ENCODE measurements at regions of chr3 and their contacts with region 1.

Region 1: GRCh38 chr3:52154117-52155094 is at the start of gene POC1A:
- DNase-seq: peak; percentile 88 to 99
- H3K4me3 ChIP-seq: peak within 1 kb of the TSS; percentile 72 to 91
- H3K27ac ChIP-seq: peak within 1 kb of the TSS; percentile 88 to 92
- H3K4me1 ChIP-seq: peaks cover 6 to 11% of the 10 kb centered on the region in 2 donors
- H3K27me3 ChIP-seq: no peaks in the 10 kb centered on the region
- CTCF ChIP-seq: peak in 2 of 3 experiments; percentile 10 to 13
- total RNA-seq, gene POC1A: not detected

Region 2: DNA sequence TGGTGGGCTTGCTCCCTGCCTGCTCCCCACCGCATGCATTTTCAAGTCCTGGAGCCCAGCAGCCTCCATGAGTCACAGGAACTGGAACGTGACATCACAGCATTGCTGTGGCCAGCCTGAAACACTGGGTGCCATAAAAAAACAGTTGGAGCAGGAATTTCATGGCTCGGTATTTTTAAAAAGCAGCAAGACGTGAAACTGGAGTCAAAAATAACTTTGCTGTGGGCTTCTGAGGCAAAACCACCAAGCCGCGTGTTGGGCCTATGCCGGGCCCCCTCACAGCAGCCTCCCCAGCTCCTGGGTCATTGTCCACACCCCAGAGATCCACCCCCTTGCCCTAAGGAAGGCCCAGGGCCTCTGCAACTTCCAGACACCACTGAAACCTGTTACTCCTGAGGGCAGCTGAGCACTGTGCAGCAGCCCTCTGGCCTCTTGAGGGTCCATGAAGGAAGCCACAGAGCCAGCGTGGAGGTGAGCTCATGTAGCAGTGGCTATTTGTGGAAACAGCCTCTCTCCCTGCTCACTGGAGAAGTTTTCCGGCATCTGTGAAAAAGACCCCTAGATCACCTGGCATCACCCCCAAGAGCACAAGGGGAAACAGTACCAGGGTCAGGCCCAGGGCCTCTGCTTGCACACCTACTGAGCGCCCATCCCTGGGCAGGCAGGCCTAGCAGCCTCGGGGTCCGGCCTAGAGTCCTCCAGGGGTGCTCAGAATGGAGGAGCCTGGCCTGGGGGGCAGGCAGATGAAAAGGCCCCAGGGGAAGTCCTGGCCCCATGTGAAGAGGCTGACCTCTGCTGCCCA is 64.1 kb before region 1 on chr3:
- intact Hi-C with region 1: loop called (anchors 1 kb)
- DNase-seq: peak in 1 of 2 donors; percentile 93
- H3K4me3 ChIP-seq: no peak overlapping the region
- H3K27ac ChIP-seq: peak overlapping the region; percentile 98 to 99
- H3K4me1 ChIP-seq: peaks cover 31 to 41% of the 10 kb centered on the region in 2 donors
- H3K27me3 ChIP-seq: no peaks in the 10 kb centered on the region
- CTCF ChIP-seq: no peak

Region 3: DNA sequence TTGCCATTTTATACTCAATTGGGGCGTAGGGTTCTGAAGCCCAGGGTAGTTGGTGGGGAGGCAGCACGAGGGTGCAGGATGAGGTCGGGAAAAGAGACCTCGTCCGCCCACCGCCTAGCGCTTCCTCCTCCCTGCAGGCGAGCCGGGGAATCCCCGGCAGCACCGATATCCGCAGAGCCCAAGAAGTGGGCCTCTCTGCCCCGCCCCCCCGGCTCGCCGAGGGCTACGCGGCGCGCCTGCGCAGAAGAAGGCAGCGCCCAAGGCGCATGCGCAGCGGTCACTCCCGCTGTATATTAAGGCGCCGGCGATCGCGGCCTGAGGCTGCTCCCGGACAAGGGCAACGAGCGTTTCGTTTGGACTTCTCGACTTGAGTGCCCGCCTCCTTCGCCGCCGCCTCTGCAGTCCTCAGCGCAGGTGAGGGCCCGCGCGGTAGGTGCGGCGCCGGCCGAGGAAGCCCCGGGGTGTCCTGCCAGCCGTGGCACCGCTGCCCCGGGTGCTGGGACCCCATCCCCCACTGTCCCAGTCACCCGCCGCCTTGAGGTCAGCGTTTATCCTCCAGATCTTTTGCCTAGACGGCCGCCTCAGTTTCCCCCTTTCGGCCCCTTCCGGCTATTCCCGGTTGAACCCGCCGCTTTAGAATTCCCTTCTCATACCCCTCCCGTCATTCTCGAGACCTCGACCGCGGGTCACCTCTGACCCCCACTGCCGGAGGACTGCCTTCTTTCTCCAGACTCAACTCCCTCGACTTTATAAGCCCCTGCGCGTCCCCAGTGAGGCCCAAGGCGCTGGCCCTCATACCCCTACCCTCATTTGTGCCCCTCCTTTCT is 43.6 kb after region 1 on chr3 and contains the start of gene ALAS1:
- intact Hi-C with region 1: loop called (anchors 1 kb)
- DNase-seq: peak; percentile 77 to 95
- H3K4me3 ChIP-seq: peak within 1 kb of the TSS; percentile 81 to 89
- H3K27ac ChIP-seq: peak within 1 kb of the TSS; percentile 70 to 74
- H3K4me1 ChIP-seq: peaks cover 0 to 13% of the 10 kb centered on the region in 2 donors
- H3K27me3 ChIP-seq: no peaks in the 10 kb centered on the region
- CTCF ChIP-seq: peak in 2 of 3 experiments; percentile 3 to 13
- total RNA-seq, gene ALAS1: 58.3 TPM

Region 4: DNA sequence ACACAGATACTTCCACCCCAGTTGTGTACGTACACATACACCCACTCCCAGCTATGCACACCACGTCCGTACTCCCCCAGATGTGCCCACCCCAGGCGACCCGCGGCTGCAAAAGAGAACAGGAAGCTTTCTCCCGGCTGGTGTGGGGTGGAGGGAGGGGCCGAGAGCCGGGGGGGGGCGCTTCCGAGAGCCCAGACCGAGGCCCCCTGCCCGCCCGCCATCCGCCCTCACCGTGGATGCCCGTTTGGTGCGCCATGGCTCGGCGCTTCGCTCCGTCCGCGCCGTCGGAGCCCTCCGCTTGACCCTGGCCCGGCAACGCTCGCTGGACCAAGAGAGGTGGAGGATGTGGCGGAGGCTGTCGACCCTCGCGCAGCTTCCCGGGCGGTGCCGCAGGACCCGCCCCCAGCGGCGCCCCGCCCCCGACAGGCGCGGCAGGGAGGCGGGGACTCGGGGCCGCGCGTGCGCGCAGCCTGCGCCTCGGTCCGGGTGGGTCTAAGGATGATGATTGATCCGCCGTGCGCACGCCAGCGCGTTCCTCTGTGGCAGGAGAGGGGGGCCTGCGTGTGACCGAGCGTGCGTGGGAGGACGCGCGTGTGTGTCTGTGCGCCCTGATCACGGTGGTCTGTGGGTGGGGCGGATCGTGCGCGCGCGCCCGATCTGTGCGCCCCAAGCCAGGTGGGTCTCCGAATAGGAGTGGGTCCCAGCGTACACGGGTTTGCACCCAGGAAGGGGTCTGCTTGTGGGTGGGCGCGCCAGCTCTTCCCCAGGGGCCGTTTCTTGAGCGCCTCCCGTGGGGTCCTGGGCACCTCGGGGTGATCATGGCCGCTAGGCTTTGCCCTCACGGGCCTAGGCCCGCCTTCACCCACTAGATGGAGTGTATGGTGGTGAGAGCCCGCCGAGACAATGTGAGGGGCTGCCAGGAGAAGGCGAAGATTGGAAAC is 84.6 kb after region 1 on chr3 and contains the start of gene TWF2:
- intact Hi-C with region 1: loop called (anchors 5 kb)
- DNase-seq: peak in 1 of 2 donors; percentile 90
- H3K4me3 ChIP-seq: peak within 1 kb of the TSS; percentile 90 to 99
- H3K27ac ChIP-seq: peak within 1 kb of the TSS; percentile 88 to 89
- H3K4me1 ChIP-seq: peaks cover 9 to 32% of the 10 kb centered on the region in 2 donors
- H3K27me3 ChIP-seq: no peaks in the 10 kb centered on the region
- CTCF ChIP-seq: peak in 2 of 3 experiments; percentile 47 to 55
- total RNA-seq, gene TWF2: 162 TPM

Region 5: DNA sequence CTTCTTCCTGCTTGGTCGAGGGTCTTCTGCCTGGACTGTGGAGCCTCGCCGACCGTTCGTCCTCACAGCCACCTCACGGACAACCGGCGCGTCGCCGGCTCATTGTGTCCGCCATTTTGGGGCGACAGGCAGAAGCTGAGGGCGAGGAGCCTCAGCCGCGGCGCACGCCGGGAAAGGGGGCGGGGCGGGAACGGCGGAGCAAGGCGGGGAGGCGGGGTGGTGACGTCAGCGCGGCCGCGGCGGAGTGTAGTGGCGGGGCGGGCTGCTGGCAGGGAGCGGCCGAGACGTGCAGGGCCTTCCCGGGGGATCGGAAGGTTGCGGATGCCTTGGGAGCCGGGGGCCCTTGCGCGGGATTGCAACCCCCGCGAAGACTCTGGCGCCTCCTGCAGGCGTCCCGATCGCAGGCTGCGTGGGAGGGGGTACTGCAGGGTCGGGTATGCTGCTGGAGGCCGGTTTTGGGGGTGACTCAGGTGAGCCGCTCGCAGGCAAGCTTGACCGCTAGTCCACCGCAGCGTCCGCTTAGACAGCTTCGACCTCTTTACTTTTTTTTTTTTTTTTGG is 124.2 kb after region 1 on chr3 and contains the start of gene WDR82:
- intact Hi-C with region 1: loop called (anchors 2 kb)
- DNase-seq: peak; percentile 82 to 97
- H3K4me3 ChIP-seq: peak within 1 kb of the TSS; percentile 81 to 91
- H3K27ac ChIP-seq: peak within 1 kb of the TSS; percentile 94 to 97
- H3K4me1 ChIP-seq: peaks cover 11 to 43% of the 10 kb centered on the region in 2 donors
- H3K27me3 ChIP-seq: no peaks in the 10 kb centered on the region
- CTCF ChIP-seq: peak; percentile 48 to 54 (median 49)
- total RNA-seq, gene WDR82: 42.0 TPM

Region 6: GRCh38 chr3:52286777-52287110 is 132.3 kb after region 1 on chr3:
- intact Hi-C with region 1: loop called (anchors 2 kb)
- DNase-seq: no peak
- H3K4me3 ChIP-seq: peak overlapping the region; percentile 68 to 74
- H3K27ac ChIP-seq: peak overlapping the region; percentile 94 to 98
- H3K4me1 ChIP-seq: peaks cover 0 to 21% of the 10 kb centered on the region in 2 donors
- H3K27me3 ChIP-seq: no peaks in the 10 kb centered on the region
- CTCF ChIP-seq: no peak

Region 7: GRCh38 chr3:52536369-52537164 is 382.2 kb after region 1 on chr3 and contains the start of gene UQCC5:
- intact Hi-C with region 1: loop called (anchors 5 kb)
- DNase-seq: peak; percentile 95 to 98
- H3K4me3 ChIP-seq: peak within 1 kb of the TSS; percentile 74 to 78
- H3K27ac ChIP-seq: peak within 1 kb of the TSS; percentile 80 to 86
- H3K4me1 ChIP-seq: peaks cover 15 to 28% of the 10 kb centered on the region in 2 donors
- H3K27me3 ChIP-seq: no peaks in the 10 kb centered on the region
- CTCF ChIP-seq: peak in 1 of 3 experiments; percentile 2
- total RNA-seq, gene UQCC5: not detected

Measured in ascending aorta (tissue), 2 donors.